Adrenal gland (tissue), 19 donors: ENCODE measurements at regions of chr19 and their contacts with region 1.

Region 1: DNA sequence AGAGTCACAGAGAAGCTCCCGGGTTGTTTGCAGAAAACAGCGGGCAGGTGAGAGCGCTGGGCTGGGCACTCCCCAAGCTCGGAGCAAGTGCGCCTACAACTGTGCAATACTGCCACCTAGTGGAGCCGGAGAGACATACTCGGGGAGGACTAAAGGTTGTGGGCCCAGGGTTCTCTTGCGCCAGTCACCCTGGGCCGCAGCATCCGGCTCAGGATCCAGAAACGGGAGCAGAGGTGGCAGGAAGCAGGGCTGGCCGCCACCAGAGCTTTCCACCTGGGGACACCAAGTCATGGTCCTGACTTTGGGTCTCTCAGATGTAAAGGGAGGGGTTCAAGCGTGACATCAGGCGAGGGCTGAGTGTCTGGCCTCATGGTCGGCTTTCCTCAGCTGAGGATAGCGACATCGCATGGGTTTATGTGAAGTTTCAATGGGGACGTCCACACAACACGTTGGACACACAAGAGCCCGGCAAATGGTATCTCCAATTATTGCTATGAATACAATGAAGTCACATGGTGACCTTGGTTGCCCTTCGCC is 11.2 kb upstream of the KLK4 start:
- DNase-seq: peak; percentile 66 to 85 (median 79)
- H3K4me3 ChIP-seq: no peak overlapping the region
- H3K27ac ChIP-seq: no peak overlapping the region
- H3K4me1 ChIP-seq: peaks cover 0 to 10% of the 10 kb centered on the region in 2 donors
- H3K27me3 ChIP-seq: peaks cover 4% of the 10 kb centered on the region
- CTCF ChIP-seq: peak; percentile 75 to 90 (median 82)
- POLR2A ChIP-seq: no peak

Region 2: DNA sequence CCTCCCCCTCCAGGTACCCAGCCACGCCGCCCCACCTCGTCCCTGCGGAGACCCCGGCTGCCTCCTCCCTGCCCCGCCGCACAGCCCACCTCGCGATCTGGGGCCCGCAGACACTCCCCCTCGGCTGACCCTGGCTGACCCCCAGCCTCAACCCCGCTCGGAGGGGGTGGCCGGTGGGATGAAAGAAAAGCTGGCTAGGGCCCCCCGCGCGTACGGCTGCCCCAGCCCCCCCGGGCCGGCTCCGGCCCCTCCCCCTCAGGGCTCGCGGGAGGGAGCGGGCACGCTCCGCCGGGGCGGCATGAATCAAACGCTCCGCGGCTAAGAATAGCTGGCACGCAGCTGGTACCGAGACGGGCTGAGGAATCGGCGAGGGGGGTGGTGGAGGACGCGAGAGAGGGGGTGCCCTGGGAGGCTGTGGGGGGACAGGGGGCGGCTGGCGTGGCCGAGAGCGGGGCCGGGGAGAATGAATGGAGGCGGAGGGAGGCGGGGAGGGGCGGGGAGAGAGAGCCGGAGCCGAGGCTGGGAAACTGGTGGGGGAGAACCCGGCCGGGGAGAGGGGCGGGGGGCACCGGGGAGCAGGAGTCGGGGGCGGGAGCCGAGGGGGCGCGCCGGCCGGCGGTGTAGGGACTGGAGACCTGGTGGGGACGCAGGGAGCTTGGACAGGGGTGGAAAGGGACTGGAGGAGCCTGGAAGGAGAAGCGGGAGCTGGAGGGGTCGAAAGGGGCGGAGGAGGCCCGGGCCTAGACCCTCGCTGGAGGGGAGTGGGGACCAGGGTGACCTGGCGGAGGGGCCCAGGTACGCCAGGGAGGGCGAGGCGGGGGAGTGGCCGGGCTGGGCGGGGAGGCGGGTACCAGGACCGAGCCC is 203.9 kb before region 1 on chr19:
- intact Hi-C with region 1: loop called in 1 of 2 experiments (anchors 10 kb)
- DNase-seq: peak in 4 of 7 donors; percentile 35 to 69 (median 47)
- H3K4me3 ChIP-seq: peak overlapping the region in 2 of 4 donors; percentile 9 to 57
- H3K27ac ChIP-seq: no peak overlapping the region
- H3K4me1 ChIP-seq: peaks cover 13 to 33% of the 10 kb centered on the region in 2 donors
- H3K27me3 ChIP-seq: no peaks in the 10 kb centered on the region
- CTCF ChIP-seq: no peak
- POLR2A ChIP-seq: no peak

Region 3: GRCh38 chr19:50804420-50805272 is 117.7 kb before region 1 on chr19:
- intact Hi-C with region 1: loop called (anchors 5 to 10 kb)
- DNase-seq: peak; percentile 98 to 99 (median 99)
- H3K4me3 ChIP-seq: peak overlapping the region; percentile 54 to 93 (median 75)
- H3K27ac ChIP-seq: peak overlapping the region; percentile 73 to 98 (median 95)
- H3K4me1 ChIP-seq: peaks cover 13 to 22% of the 10 kb centered on the region in 2 donors
- H3K27me3 ChIP-seq: no peaks in the 10 kb centered on the region
- CTCF ChIP-seq: peak in 1 of 6 experiments; percentile 7
- POLR2A ChIP-seq: peak; percentile 25 to 39

Region 4: GRCh38 chr19:51097166-51097738 is 174.9 kb after region 1 on chr19:
- intact Hi-C with region 1: loop called in 1 of 2 experiments (anchors 10 kb)
- DNase-seq: peak; percentile 56 to 78 (median 66)
- H3K4me3 ChIP-seq: no peak overlapping the region
- H3K27ac ChIP-seq: no peak overlapping the region
- H3K4me1 ChIP-seq: peaks cover 0 to 10% of the 10 kb centered on the region in 2 donors
- H3K27me3 ChIP-seq: no peaks in the 10 kb centered on the region
- CTCF ChIP-seq: peak; percentile 41 to 65 (median 54)
- POLR2A ChIP-seq: no peak